GM12878 (cell line): ENCODE measurements at regions of chr16 and their contacts with region 1.

Region 1: DNA sequence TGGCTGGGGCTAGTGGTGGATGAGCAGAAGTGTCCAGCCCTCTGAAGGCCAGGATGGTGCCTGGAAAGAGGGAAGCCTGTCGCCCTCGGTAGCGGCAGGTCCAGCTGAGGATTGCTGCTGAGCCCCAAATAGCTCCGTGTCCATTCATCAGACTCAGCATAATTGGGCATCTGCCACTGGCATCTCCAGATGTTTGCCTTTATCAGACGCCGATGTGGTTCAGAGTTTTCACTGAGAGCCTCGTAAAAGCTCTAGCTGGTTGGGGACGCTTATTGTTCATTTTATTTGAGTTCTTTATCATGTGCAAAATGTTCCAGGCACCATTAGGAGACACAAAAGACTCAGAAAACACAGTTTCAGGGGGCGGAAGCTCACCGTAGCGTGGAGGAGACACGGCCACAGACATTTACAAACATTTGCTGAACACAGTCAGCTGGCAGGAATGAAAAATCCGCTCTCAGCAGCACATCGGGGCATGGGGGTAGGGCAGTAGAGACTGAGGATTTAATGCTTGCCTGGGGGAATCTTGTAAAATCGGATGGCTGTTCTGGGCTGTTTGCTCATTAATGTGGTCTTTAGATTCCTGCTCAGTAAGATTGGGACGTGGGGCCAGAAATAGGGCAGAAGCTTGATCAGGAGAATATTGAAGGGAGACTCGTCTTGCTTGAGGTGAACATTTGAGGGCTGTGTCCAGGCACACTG is 41.7 kb downstream of the SMPD3 start:
- DNase-seq: no peak
- ATAC-seq: no peak
- H3K4me3 ChIP-seq: no peak overlapping the region
- H3K27ac ChIP-seq: no peak overlapping the region
- H3K4me1 ChIP-seq: no peaks in the 10 kb centered on the region
- H3K27me3 ChIP-seq: no peaks in the 10 kb centered on the region
- CTCF ChIP-seq: no peak
- EP300 ChIP-seq: no peak
- POLR2A ChIP-seq: no peak
- RAD21 ChIP-seq: no peak

Region 2: GRCh38 chr16:68116256-68116867 is 290.2 kb before region 1 on chr16:
- CTCF ChIA-PET with region 1: no interaction called
- POLR2A ChIA-PET with region 1: no interaction called
- RAD21 ChIA-PET with region 1: no interaction called
- SMC1A ChIA-PET with region 1: no interaction called
- in situ Hi-C with region 1: no loop called
- intact Hi-C with region 1: no loop called
- DNase-seq: no peak
- ATAC-seq: peak; percentile 59
- H3K4me3 ChIP-seq: no peak overlapping the region
- H3K27ac ChIP-seq: no peak overlapping the region
- H3K4me1 ChIP-seq: peaks cover 19% of the 10 kb centered on the region
- H3K27me3 ChIP-seq: no peaks in the 10 kb centered on the region
- CTCF ChIP-seq: peak; percentile 47 to 58 (median 57); a peak in 5 of 6 replicates
- EP300 ChIP-seq: no peak
- POLR2A ChIP-seq: no peak
- RAD21 ChIP-seq: peak; percentile 61

Region 3: GRCh38 chr16:68417711-68418301 is 11.2 kb after region 1 on chr16:
- CTCF ChIA-PET with region 1: interaction called, 11 read pairs
- POLR2A ChIA-PET with region 1: interaction called, 3 read pairs
- RAD21 ChIA-PET with region 1: interaction called, 3 read pairs
- SMC1A ChIA-PET with region 1: interaction called, 10 read pairs
- in situ Hi-C with region 1: no loop called
- intact Hi-C with region 1: no loop called
- DNase-seq: peak; percentile 73
- ATAC-seq: peak; percentile 93
- H3K4me3 ChIP-seq: peak overlapping the region; percentile 16; the same call in 1 of the 2 replicates
- H3K27ac ChIP-seq: peak overlapping the region; percentile 70
- H3K4me1 ChIP-seq: peaks cover 25% of the 10 kb centered on the region
- H3K27me3 ChIP-seq: no peaks in the 10 kb centered on the region
- CTCF ChIP-seq: no peak
- EP300 ChIP-seq: no peak
- POLR2A ChIP-seq: peak; percentile 24; the same call in 1 of the 2 replicates
- RAD21 ChIP-seq: no peak

Region 4: DNA sequence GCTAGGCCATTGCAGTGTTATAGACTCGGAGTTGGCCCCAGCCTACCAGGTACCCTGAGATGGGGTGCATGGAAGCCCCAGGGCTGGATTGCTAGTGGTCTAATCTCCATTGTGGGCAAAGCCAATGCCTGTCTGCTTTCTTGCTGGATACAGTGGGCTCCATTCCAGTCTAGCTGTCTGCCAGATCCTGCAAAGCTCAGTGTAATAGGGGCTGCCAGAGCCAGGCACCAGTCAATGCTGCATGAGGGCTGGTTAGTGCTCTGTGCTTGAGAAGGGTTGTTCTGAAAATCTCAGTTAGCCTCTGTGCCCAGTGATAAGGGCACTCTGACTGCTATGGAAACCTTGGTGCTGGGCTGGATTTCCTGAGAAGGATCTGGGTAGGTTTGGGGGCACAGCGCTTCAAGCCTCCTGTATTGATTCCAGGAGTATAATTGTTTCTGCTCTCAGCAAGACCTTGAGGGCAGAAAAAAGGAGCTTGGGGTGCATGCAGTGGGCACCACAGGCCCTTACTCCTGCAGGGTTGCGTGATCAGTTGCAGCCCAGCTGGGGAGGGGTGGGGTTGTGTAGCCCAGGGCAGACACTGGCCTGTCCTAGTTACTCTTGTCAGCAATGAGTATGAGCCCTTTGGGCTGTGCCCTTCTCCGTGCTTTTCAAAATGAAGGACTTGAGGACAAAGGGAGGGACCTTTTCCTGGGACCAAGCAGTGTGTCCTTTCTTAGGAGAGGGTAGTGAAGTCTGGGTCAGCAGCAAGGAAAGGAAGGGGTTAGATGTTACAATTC is 22.7 kb after region 1 on chr16:
- CTCF ChIA-PET with region 1: no interaction called
- POLR2A ChIA-PET with region 1: no interaction called
- RAD21 ChIA-PET with region 1: no interaction called
- SMC1A ChIA-PET with region 1: no interaction called
- in situ Hi-C with region 1: no loop called
- intact Hi-C with region 1: no loop called
- DNase-seq: no peak
- ATAC-seq: no peak
- H3K4me3 ChIP-seq: no peak overlapping the region
- H3K27ac ChIP-seq: no peak overlapping the region
- H3K4me1 ChIP-seq: no peaks in the 10 kb centered on the region
- H3K27me3 ChIP-seq: no peaks in the 10 kb centered on the region; a peak in 1 of 4 replicates
- CTCF ChIP-seq: no peak
- EP300 ChIP-seq: no peak
- POLR2A ChIP-seq: no peak
- RAD21 ChIP-seq: no peak

Region 5: GRCh38 chr16:68520649-68521086 is 114.1 kb after region 1 on chr16:
- CTCF ChIA-PET with region 1: interaction called, 10 read pairs
- POLR2A ChIA-PET with region 1: no interaction called
- RAD21 ChIA-PET with region 1: interaction called, 3 read pairs
- SMC1A ChIA-PET with region 1: no interaction called
- in situ Hi-C with region 1: no loop called
- intact Hi-C with region 1: no loop called
- DNase-seq: no peak
- ATAC-seq: peak; percentile 98
- H3K4me3 ChIP-seq: no peak overlapping the region
- H3K27ac ChIP-seq: no peak overlapping the region
- H3K4me1 ChIP-seq: no peaks in the 10 kb centered on the region; the same call in 1 of the 2 replicates
- H3K27me3 ChIP-seq: no peaks in the 10 kb centered on the region; a peak in 1 of 4 replicates
- CTCF ChIP-seq: peak; percentile 99 to 100 (median 100); a peak in 5 of 6 replicates
- EP300 ChIP-seq: peak in 1 of 2 experiments; percentile 25; a peak in 1 of 4 replicates
- POLR2A ChIP-seq: no peak
- RAD21 ChIP-seq: peak; percentile 55

Region 6: GRCh38 chr16:69143116-69143515 is 736.5 kb after region 1 on chr16:
- CTCF ChIA-PET with region 1: no interaction called
- POLR2A ChIA-PET with region 1: no interaction called
- RAD21 ChIA-PET with region 1: no interaction called
- SMC1A ChIA-PET with region 1: no interaction called
- in situ Hi-C with region 1: no loop called
- intact Hi-C with region 1: no loop called
- DNase-seq: no peak
- ATAC-seq: peak; percentile 52
- H3K4me3 ChIP-seq: no peak overlapping the region
- H3K27ac ChIP-seq: no peak overlapping the region
- H3K4me1 ChIP-seq: no peaks in the 10 kb centered on the region
- H3K27me3 ChIP-seq: no peaks in the 10 kb centered on the region
- CTCF ChIP-seq: 0 out of 6 replicates have a peak, but pooled peaks of 1 of the 3 experiments have one; percentile 8
- EP300 ChIP-seq: no peak
- POLR2A ChIP-seq: no peak
- RAD21 ChIP-seq: no peak